Sigmoid colon (tissue), 7 donors: ENCODE measurements at regions of chr18 and their contacts with region 1.

Region 1: GRCh38 chr18:43620936-43621335 is 343.6 kb upstream of the SYT4 start:
- DNase-seq: no peak
- H3K4me3 ChIP-seq: no peak overlapping the region
- H3K27ac ChIP-seq: no peak overlapping the region
- H3K4me1 ChIP-seq: no peaks in the 10 kb centered on the region
- H3K27me3 ChIP-seq: no peaks in the 10 kb centered on the region
- CTCF ChIP-seq: peak in 3 of 4 experiments; percentile 35 to 63 (median 50)
- EP300 ChIP-seq: no peak
- POLR2A ChIP-seq: no peak

Region 2: DNA sequence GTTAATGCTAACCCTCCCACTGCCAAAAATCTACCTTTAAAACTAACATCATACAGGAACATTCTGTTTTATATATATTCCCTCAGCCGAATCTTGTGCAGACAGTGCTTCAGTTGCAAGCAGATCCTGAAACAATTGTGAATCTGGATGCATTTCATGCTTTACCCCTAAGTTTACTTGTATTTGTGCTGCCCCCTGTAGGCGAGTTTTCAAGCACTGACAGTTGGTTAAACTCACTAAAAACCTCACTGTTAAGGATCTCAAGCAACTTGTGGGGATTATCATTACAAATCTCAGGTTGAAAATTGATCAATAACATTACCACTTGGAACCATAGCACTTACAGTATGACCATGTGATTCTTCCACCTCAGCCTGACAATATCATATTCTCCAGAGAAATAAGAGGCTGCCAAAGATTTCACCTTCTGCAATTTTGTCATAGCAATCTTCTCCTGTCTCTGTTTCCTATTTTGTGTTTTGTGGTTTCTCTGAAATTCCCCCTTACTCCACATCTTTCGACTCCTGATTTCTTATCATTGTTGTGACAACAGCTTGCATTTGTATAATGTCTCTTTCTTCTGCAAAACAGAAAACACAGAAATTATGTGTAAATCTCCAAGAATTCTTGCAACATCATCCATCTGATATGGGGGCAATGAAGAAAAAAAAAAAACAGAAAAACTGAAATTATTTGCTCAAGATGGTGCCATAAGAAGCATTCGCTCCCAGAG is 705.1 kb after region 1 on chr18:
- intact Hi-C with region 1: loop called (anchors 5 kb)
- DNase-seq: no peak
- H3K4me3 ChIP-seq: no peak overlapping the region
- H3K27ac ChIP-seq: no peak overlapping the region
- H3K4me1 ChIP-seq: no peaks in the 10 kb centered on the region
- H3K27me3 ChIP-seq: no peaks in the 10 kb centered on the region
- CTCF ChIP-seq: peak in 2 of 4 experiments; percentile 18 to 39
- EP300 ChIP-seq: no peak
- POLR2A ChIP-seq: no peak